T-cell (primary cell): ENCODE measurements at regions of chr4 and their contacts with region 1.

Region 1: GRCh38 chr4:98467627-98468072 is 190.8 kb downstream of the TSPAN5 start:
- DNase-seq: peak; percentile 27 to 83 (median 60)
- ATAC-seq: peak; percentile 90 to 96 (median 92)
- H3K4me3 ChIP-seq: peak overlapping the region; percentile 20 to 22
- H3K4me3 Mint-ChIP-seq: peak overlapping the region; percentile 57 to 72 (median 65)
- H3K27ac ChIP-seq: no peak overlapping the region
- H3K27ac Mint-ChIP-seq: peak overlapping the region in 1 of 2 donors; percentile 34
- H3K4me1 ChIP-seq: peaks cover 0 to 20% of the 10 kb centered on the region in 2 experiments
- H3K4me1 Mint-ChIP-seq: peaks cover 22 to 24% (median 24%) of the 10 kb centered on the region in 3 donors
- H3K27me3 ChIP-seq: peaks cover 0 to 3% of the 10 kb centered on the region in 2 experiments
- H3K27me3 Mint-ChIP-seq: no peaks in the 10 kb centered on the region

Region 2: DNA sequence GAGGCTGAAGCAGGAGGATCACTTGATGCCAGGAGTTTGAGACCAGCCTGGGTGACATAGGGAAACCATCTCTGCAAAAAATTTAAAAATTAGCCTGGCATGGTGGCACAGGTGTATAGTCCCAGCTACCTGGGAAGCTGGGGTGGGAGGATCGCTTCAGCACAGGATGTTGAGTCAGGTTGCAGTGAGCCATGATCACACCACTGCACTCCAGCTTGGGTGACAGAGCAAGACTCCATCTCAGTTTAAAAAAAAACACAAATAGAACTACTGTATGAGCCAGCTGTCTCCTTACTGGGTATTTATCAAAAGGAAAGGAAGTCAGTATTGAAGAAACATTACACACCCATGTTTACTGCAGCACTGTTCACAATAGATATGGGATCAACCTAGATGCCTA is 67.7 kb before region 1 on chr4:
- CTCF ChIA-PET with region 1: no interaction called
- POLR2A ChIA-PET with region 1: no interaction called
- DNase-seq: no peak
- ATAC-seq: no peak
- H3K4me3 ChIP-seq: no peak overlapping the region
- H3K4me3 Mint-ChIP-seq: no peak overlapping the region
- H3K27ac ChIP-seq: no peak overlapping the region
- H3K27ac Mint-ChIP-seq: no peak overlapping the region
- H3K4me1 ChIP-seq: no peaks in the 10 kb centered on the region
- H3K4me1 Mint-ChIP-seq: peaks cover 0 to 3% (median 0%) of the 10 kb centered on the region in 3 donors
- H3K27me3 ChIP-seq: no peaks in the 10 kb centered on the region
- H3K27me3 Mint-ChIP-seq: no peaks in the 10 kb centered on the region

Region 3: GRCh38 chr4:98573791-98574190 is 106.1 kb after region 1 on chr4:
- CTCF ChIA-PET with region 1: interaction called in 1 of 2 experiments, 11 read pairs
- POLR2A ChIA-PET with region 1: no interaction called
- DNase-seq: no peak
- ATAC-seq: no peak
- H3K4me3 ChIP-seq: no peak overlapping the region
- H3K4me3 Mint-ChIP-seq: no peak overlapping the region
- H3K27ac ChIP-seq: no peak overlapping the region
- H3K27ac Mint-ChIP-seq: no peak overlapping the region
- H3K4me1 ChIP-seq: no peaks in the 10 kb centered on the region
- H3K4me1 Mint-ChIP-seq: peaks cover 26 to 30% (median 28%) of the 10 kb centered on the region in 3 donors
- H3K27me3 ChIP-seq: no peaks in the 10 kb centered on the region
- H3K27me3 Mint-ChIP-seq: no peaks in the 10 kb centered on the region